ENCODE measurements at regions of chr2 and their contacts with region 1.

Region 1: DNA sequence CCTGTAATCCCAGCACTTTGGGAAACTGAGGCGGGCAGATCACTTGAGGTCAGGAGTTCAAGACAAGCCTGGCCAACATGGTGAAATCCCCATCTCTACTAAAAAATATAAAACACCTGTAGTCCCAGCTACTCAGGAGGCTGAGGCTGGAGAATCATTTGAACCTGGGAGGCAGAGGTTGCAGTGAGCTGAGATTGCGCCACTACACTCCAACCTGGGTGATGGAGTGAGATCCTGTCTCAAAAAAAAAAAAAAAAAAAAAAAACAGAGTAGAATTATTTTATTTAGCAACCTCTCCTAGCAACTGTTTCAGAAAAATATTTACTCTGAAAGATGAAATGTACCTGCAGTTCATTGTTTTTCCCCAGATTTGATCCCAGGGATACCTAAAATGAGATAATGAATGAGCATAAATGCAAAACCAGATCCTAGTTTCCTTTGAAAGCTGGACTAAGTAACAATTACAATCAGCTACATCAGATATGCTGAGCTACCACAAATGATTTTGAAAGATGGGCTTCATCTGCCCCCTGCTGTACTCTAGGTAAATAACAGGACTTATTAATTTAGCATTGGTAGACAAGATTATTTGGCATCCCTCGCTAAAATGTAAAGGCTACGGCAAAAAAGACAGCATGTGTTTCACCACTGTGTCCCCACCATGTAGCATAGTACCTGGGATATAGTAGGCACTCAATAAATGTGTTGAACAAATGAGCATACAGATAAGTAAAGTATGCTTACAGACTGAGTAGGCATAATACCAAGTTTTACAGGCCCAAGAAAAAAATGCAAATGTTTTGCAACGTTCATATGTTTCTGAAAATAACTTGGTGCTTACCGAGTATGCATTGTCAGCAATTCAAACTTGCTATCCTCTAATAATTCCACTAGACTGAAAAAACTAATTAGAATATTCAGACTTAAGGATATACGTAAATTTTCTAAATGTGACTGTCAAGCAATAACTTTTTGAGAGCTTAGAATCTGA is 102.5 kb downstream of the ATL2 start:
- DNase-seq: peak in 3 of 9 experiments; percentile 21 to 64 (median 63)
- ATAC-seq: peak; percentile 36
- H3K4me3 ChIP-seq: no peak overlapping the region
- H3K4me3 Mint-ChIP-seq: no peak overlapping the region
- H3K27ac ChIP-seq: no peak overlapping the region
- H3K27ac Mint-ChIP-seq: no peak overlapping the region
- H3K4me1 ChIP-seq: no peaks in the 10 kb centered on the region
- H3K4me1 Mint-ChIP-seq: no peaks in the 10 kb centered on the region
- H3K27me3 ChIP-seq: no peaks in the 10 kb centered on the region
- H3K27me3 Mint-ChIP-seq: peaks cover 2% of the 10 kb centered on the region
- CTCF ChIP-seq: peak; percentile 46

Region 2: GRCh38 chr2:37397166-37397565 is 877.4 kb before region 1 on chr2:
- CTCF ChIA-PET with region 1: no interaction called
- POLR2A ChIA-PET with region 1: no interaction called
- intact Hi-C with region 1: loop called (anchors 2 to 10 kb)
- DNase-seq: no peak
- ATAC-seq: no peak
- H3K4me3 ChIP-seq: no peak overlapping the region
- H3K4me3 Mint-ChIP-seq: no peak overlapping the region
- H3K27ac ChIP-seq: no peak overlapping the region
- H3K27ac Mint-ChIP-seq: no peak overlapping the region
- H3K4me1 ChIP-seq: no peaks in the 10 kb centered on the region
- H3K4me1 Mint-ChIP-seq: no peaks in the 10 kb centered on the region
- H3K27me3 ChIP-seq: no peaks in the 10 kb centered on the region
- H3K27me3 Mint-ChIP-seq: no peaks in the 10 kb centered on the region
- CTCF ChIP-seq: no peak

Region 3: GRCh38 chr2:37890893-37891495 is 383.6 kb before region 1 on chr2:
- CTCF ChIA-PET with region 1: no interaction called
- POLR2A ChIA-PET with region 1: no interaction called
- intact Hi-C with region 1: loop called in 1 of 2 experiments (anchors 10 kb)
- DNase-seq: peak; percentile 27 to 75 (median 68)
- ATAC-seq: peak; percentile 57
- H3K4me3 ChIP-seq: no peak overlapping the region
- H3K4me3 Mint-ChIP-seq: no peak overlapping the region
- H3K27ac ChIP-seq: no peak overlapping the region
- H3K27ac Mint-ChIP-seq: no peak overlapping the region
- H3K4me1 ChIP-seq: peaks cover 36% of the 10 kb centered on the region
- H3K4me1 Mint-ChIP-seq: peaks cover 40% of the 10 kb centered on the region
- H3K27me3 ChIP-seq: peaks cover 0 to 2% of the 10 kb centered on the region in 2 experiments
- H3K27me3 Mint-ChIP-seq: peaks cover 2% of the 10 kb centered on the region
- CTCF ChIP-seq: peak; percentile 67

Measured in CD8-positive, alpha-beta T cell (primary cell).